IMR-90 (cell line): ENCODE measurements at regions of chr2 and their contacts with region 1.

Region 1: GRCh38 chr2:72745679-72746368 is 80.0 kb downstream of the EXOC6B start:
- DNase-seq: peak; percentile 78
- ATAC-seq: peak; percentile 85
- H3K4me3 ChIP-seq: no peak overlapping the region
- H3K27ac ChIP-seq: no peak overlapping the region
- H3K4me1 ChIP-seq: no peaks in the 10 kb centered on the region
- H3K27me3 ChIP-seq: no peaks in the 10 kb centered on the region
- CTCF ChIP-seq: peak; percentile 79
- POLR2A ChIP-seq: no peak
- RAD21 ChIP-seq: peak; percentile 82

Region 2: GRCh38 chr2:71545572-71546274 is 1200.1 kb before region 1 on chr2:
- CTCF ChIA-PET with region 1: no interaction called
- POLR2A ChIA-PET with region 1: no interaction called
- dilution Hi-C with region 1: no loop called
- in situ Hi-C with region 1: loop called (anchors 25 kb)
- intact Hi-C with region 1: no loop called
- DNase-seq: peak; percentile 55
- ATAC-seq: peak; percentile 79
- H3K4me3 ChIP-seq: no peak overlapping the region
- H3K27ac ChIP-seq: no peak overlapping the region
- H3K4me1 ChIP-seq: no peaks in the 10 kb centered on the region
- H3K27me3 ChIP-seq: peaks cover 24% of the 10 kb centered on the region
- CTCF ChIP-seq: peak; percentile 82
- POLR2A ChIP-seq: no peak
- RAD21 ChIP-seq: peak; percentile 83

Region 3: GRCh38 chr2:71798266-71799012 is 947.4 kb before region 1 on chr2:
- CTCF ChIA-PET with region 1: no interaction called
- POLR2A ChIA-PET with region 1: no interaction called
- dilution Hi-C with region 1: no loop called
- in situ Hi-C with region 1: loop called (anchors 25 kb)
- intact Hi-C with region 1: no loop called
- DNase-seq: peak; percentile 10
- ATAC-seq: peak; percentile 62; the same call in 1 of the 2 replicates
- H3K4me3 ChIP-seq: no peak overlapping the region
- H3K27ac ChIP-seq: no peak overlapping the region
- H3K4me1 ChIP-seq: peaks cover 12% of the 10 kb centered on the region
- H3K27me3 ChIP-seq: peaks cover 10% of the 10 kb centered on the region
- CTCF ChIP-seq: peak; percentile 61
- POLR2A ChIP-seq: no peak
- RAD21 ChIP-seq: peak; percentile 47

Region 4: GRCh38 chr2:71995067-71995665 is 750.7 kb before region 1 on chr2:
- CTCF ChIA-PET with region 1: no interaction called
- POLR2A ChIA-PET with region 1: no interaction called
- dilution Hi-C with region 1: no loop called
- in situ Hi-C with region 1: no loop called
- intact Hi-C with region 1: loop called (anchors 5 kb)
- DNase-seq: peak; percentile 5
- ATAC-seq: no peak
- H3K4me3 ChIP-seq: no peak overlapping the region
- H3K27ac ChIP-seq: no peak overlapping the region
- H3K4me1 ChIP-seq: no peaks in the 10 kb centered on the region
- H3K27me3 ChIP-seq: peaks cover 2% of the 10 kb centered on the region
- CTCF ChIP-seq: peak; percentile 45
- POLR2A ChIP-seq: no peak
- RAD21 ChIP-seq: 0 out of 2 replicates have a peak, but pooled peaks have one; percentile 4

Region 5: DNA sequence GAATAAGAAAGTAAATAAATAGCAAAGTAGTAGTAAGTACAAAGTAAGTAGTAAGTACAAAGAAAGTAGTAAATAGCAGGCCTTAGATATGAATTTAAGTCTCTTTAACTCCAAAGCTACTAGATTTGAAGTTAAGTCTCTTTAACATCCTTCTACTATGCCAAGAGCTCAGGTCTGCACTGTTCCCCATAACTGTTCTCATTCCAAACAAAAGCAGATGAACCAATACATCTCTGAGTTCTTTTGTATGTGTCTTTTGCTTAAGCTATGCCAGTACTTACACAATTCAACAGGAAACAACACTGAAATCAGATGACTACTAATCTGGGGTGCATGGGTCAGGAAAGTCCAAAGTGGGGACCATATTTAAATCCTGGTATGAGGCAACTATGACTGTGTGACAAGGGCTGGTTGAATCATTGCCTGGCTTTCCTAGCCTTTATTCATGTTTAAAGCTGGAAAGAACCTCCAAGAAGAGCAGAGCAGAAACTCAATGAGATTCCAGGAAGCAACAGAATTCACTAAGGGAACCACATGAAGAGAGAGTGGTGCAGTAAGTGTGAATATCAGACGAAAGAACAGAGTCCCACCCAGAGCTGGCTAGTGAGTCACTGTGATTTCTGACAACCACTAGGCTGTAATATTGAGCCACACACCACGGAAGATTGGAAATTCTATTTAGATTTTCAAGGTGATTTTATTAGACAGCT is 547.1 kb before region 1 on chr2:
- CTCF ChIA-PET with region 1: no interaction called
- POLR2A ChIA-PET with region 1: no interaction called
- dilution Hi-C with region 1: no loop called
- in situ Hi-C with region 1: no loop called
- intact Hi-C with region 1: loop called (anchors 5 kb)
- DNase-seq: peak; percentile 57
- ATAC-seq: peak; percentile 76
- H3K4me3 ChIP-seq: no peak overlapping the region
- H3K27ac ChIP-seq: no peak overlapping the region
- H3K4me1 ChIP-seq: peaks cover 2% of the 10 kb centered on the region
- H3K27me3 ChIP-seq: no peaks in the 10 kb centered on the region
- CTCF ChIP-seq: peak; percentile 42
- POLR2A ChIP-seq: no peak
- RAD21 ChIP-seq: peak; percentile 42

Region 6: DNA sequence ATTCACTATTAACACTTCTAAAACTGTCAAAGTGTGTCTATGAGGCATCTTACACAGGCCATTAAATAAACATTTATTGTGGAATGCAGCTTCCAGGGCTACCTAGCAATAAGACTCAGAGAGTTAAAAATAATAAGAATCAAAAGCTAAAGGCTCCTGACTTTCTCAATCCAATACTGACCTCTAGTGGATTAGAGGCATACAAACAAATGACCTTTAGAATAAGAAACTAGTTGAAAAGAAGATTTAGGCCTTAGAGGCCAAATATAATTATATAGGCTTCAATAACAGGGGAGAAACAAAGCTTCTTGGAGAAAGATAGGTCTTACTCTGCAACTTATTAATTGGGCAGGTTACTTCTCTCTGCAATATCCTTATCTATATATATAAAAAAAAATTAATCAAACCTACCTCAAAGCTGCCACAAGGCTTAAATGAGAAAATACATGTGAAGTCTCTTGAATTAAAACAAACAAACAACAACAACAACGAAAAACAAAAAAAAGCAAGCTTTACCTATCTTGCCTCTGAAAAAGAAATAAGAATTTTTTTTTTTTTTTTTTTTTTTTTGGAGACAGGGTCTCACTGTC is 166.1 kb before region 1 on chr2:
- CTCF ChIA-PET with region 1: interaction called, 5 read pairs
- POLR2A ChIA-PET with region 1: no interaction called
- dilution Hi-C with region 1: no loop called
- in situ Hi-C with region 1: loop called (anchors 10 kb)
- intact Hi-C with region 1: loop called (anchors 2 kb)
- DNase-seq: peak; percentile 64
- ATAC-seq: peak; percentile 65
- H3K4me3 ChIP-seq: no peak overlapping the region
- H3K27ac ChIP-seq: no peak overlapping the region
- H3K4me1 ChIP-seq: peaks cover 2% of the 10 kb centered on the region; the same call in 1 of the 2 replicates
- H3K27me3 ChIP-seq: no peaks in the 10 kb centered on the region
- CTCF ChIP-seq: peak; percentile 75
- POLR2A ChIP-seq: no peak
- RAD21 ChIP-seq: peak; percentile 85